ENCODE measurements at regions of chr14 and their contacts with region 1.

Region 1: GRCh38 chr14:73833530-73834257 is 17.9 kb upstream of the PTGR2 start:
- DNase-seq: no peak
- ATAC-seq: no peak
- H3K4me3 ChIP-seq: no peak overlapping the region
- H3K27ac ChIP-seq: no peak overlapping the region
- H3K4me1 ChIP-seq: no peaks in the 10 kb centered on the region; a peak in 1 of 4 replicates
- H3K27me3 ChIP-seq: no peaks in the 10 kb centered on the region
- CTCF ChIP-seq: no peak
- POLR2A ChIP-seq: no peak
- RAD21 ChIP-seq: no peak

Region 2: GRCh38 chr14:73851644-73852382 is 18.1 kb after region 1 on chr14 and contains the start of gene PTGR2:
- CTCF ChIA-PET with region 1: no interaction called
- POLR2A ChIA-PET with region 1: interaction called, 12 read pairs
- RAD21 ChIA-PET with region 1: no interaction called
- intact Hi-C with region 1: no loop called
- DNase-seq: peak; percentile 94
- ATAC-seq: peak; percentile 89
- H3K4me3 ChIP-seq: peak within 1 kb of the TSS; percentile 81 to 94
- H3K27ac ChIP-seq: peak within 1 kb of the TSS; percentile 97
- H3K4me1 ChIP-seq: peaks cover 17 to 30% of the 10 kb centered on the region in 2 experiments
- H3K27me3 ChIP-seq: no peaks in the 10 kb centered on the region
- CTCF ChIP-seq: 0 out of 6 replicates have a peak, but pooled peaks of 1 of the 3 experiments have one; percentile 4
- POLR2A ChIP-seq: peak; percentile 69
- RAD21 ChIP-seq: 0 out of 2 replicates have a peak, but pooled peaks have one; percentile 6
- total RNA-seq, gene PTGR2: 22.1 TPM